AG04450 (cell line): ENCODE measurements at regions of chr5 and their contacts with region 1.

Region 1: GRCh38 chr5:16350816-16351215 is 114.8 kb downstream of the ZNF622 start:
- DNase-seq: no peak
- H3K4me3 ChIP-seq: no peak overlapping the region
- H3K27ac ChIP-seq: no peak overlapping the region
- H3K27me3 ChIP-seq: no peaks in the 10 kb centered on the region
- CTCF ChIP-seq: no peak

Region 2: DNA sequence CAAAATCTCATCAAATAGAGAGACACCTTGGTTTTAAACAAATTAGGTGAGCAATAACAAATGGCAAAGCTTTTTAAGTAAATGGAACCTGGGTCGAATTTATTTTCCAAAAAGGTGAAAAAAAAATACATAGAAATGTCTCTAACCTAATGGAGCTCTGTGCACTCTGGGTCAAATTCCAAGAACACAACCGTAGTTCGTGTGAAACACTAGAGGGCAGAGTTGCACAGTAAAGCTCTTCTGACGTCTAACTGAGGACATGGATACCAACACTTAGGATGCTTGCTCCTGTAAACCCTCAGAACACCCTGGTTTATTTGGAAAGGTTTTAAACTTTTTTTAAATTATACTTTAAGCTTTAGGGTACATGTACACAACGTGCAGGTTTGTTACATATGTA is 190.1 kb before region 1 on chr5:
- CTCF ChIA-PET with region 1: no interaction called
- POLR2A ChIA-PET with region 1: no interaction called
- DNase-seq: peak; percentile 10
- H3K4me3 ChIP-seq: no peak overlapping the region
- H3K27ac ChIP-seq: no peak overlapping the region
- H3K27me3 ChIP-seq: no peaks in the 10 kb centered on the region
- CTCF ChIP-seq: peak; percentile 79

Region 3: DNA sequence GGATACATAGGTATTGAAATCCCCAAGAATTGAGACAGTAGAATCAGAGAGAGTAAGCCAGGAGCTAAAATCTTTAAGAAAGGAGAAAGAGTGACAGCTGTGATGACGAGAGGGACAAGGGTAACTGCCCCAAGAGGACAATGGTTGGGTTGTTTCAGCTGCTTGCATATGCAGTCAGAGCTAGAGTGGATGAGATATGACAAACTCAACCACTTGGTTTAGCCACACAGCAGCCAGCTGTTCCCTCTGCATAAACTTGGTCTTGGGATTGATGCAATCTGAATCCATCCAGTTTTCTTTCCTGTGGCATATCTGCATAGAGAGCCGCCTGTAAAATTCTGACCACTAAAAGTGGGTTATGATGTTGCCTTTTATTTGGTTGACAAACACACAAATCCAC is 14.1 kb after region 1 on chr5:
- CTCF ChIA-PET with region 1: no interaction called
- POLR2A ChIA-PET with region 1: interaction called, 12 read pairs
- DNase-seq: no peak
- H3K4me3 ChIP-seq: no peak overlapping the region
- H3K27ac ChIP-seq: no peak overlapping the region
- H3K27me3 ChIP-seq: no peaks in the 10 kb centered on the region
- CTCF ChIP-seq: no peak